Activated CD8-positive, alpha-beta memory T cell treated with anti-CD3 and anti-CD28 coated beads, Interleukin-2, amount 10 ng/mL, durations not matched to agents 7 days and 5 days (primary cell): ENCODE measurements at regions of chr14 and their contacts with region 1.

Region 1: GRCh38 chr14:106556665-106557289 is 1030.4 kb downstream of the TMEM121 start:
- DNase-seq: peak; percentile 83
- ATAC-seq: peak; percentile 47
- H3K4me3 Mint-ChIP-seq: no peak overlapping the region
- H3K27ac Mint-ChIP-seq: no peak overlapping the region
- H3K4me1 Mint-ChIP-seq: no peaks in the 10 kb centered on the region
- H3K27me3 Mint-ChIP-seq: peaks cover 36% of the 10 kb centered on the region

Region 2: DNA sequence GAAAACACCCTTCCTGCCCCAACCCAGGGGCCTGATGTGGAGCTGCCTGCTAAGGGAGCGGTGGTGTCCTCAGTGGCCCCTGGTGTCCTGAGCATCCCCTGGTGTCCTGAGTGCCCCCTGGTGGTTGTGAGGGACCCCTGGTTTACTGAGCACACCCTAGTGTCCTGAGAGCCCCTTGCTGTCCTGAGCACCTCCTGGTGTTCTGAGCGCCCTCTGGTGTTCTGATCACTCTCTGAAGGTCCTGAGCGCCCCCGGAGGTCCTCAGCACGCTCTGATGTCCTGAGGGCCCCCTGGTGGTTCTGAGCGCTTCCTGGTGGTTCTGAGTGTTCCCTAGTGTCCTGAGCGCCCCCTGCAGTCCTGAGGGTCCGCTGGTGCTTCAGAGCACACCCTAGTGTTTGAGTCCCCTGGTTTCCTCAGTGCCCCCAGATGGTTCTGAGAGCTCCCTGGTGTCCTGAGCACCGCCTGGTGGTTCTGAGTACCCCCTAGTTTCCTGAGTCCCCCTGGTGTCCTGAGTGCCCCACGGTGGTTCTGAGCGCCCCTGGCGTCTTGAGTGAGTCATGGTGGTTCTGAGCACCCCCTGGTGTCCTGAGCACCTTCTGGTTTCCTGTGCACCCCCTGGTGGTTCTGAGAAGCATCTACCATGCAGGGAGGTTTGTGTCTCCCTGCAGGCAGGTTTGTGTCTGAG is 26.2 kb before region 1 on chr14:
- CTCF ChIA-PET with region 1: interaction called, 20 read pairs
- DNase-seq: peak; percentile 63
- ATAC-seq: peak; percentile 86
- H3K4me3 Mint-ChIP-seq: no peak overlapping the region
- H3K27ac Mint-ChIP-seq: no peak overlapping the region
- H3K4me1 Mint-ChIP-seq: peaks cover 5% of the 10 kb centered on the region
- H3K27me3 Mint-ChIP-seq: peaks cover 47% of the 10 kb centered on the region

Region 3: DNA sequence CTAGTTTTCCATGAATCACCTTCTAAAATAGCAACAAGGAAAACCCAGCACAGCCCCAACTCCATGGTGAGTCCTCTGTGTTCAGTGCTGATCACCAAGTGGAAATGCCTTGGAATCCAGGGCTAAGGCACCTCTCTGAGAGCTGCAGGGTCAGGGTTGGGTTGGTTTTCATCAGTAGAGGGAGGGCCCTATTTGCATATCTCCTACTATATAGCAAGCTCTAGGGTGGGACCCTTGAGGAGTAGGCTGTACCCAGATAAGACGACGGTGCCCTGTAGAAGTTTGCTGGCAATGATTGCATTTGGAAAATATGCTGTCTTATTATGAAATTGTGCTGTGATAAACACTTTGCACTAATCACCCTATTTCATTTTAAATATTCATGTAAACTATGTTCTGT is 18.6 kb before region 1 on chr14:
- CTCF ChIA-PET with region 1: interaction called, 31 read pairs
- DNase-seq: no peak
- ATAC-seq: no peak
- H3K4me3 Mint-ChIP-seq: no peak overlapping the region
- H3K27ac Mint-ChIP-seq: no peak overlapping the region
- H3K4me1 Mint-ChIP-seq: peaks cover 15% of the 10 kb centered on the region
- H3K27me3 Mint-ChIP-seq: peaks cover 47% of the 10 kb centered on the region